ENCODE measurements at regions of chr7 and their contacts with region 1.

Region 1: DNA sequence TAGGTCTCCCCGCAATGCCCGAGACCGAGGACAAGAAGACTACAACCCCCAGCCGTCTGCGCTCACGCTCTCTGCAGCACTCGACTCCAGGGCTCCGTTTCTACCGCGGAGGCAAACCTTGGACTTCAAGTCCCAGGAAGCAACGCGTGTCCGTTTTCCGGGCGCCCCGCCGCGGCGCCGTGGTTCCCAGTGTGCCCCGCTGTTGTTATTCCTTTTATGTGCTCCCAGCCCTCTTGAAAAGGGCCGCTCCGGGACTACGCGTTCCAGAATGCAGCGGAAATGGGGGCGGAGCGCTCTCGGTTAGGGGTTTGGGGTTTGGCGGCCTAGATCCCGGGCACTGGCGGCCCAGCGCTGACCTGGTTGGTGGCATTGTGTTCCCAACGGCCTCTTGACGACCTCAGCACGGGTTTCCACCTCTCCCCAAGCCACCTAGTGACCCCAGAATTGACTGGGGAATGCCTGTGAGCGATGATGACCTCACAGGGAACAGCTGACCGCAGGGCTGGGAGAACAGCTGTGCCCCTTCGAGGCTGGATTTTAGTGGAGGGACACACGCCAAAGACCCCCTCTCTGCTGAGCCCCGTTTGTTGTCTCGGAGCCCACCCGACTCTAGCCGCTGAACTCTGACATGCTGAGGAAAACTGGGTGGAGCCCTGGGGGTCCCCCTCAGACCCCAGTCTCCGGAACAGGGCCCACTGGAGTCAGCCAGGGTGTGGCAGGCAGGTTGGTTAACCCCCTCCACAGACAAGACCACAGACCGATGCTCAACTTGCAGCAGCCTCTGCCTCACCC is 488 bp upstream of the CDK5 start:
- DNase-seq: peak; percentile 98
- ATAC-seq: peak; percentile 96
- H3K4me3 Mint-ChIP-seq: peak overlapping the region; percentile 81
- H3K27ac Mint-ChIP-seq: peak overlapping the region; percentile 94
- H3K4me1 Mint-ChIP-seq: peaks cover 28% of the 10 kb centered on the region
- H3K27me3 Mint-ChIP-seq: no peaks in the 10 kb centered on the region

Region 2: GRCh38 chr7:149125863-149126661 is 1932.1 kb before region 1 on chr7 and contains the start of gene ZNF425:
- CTCF ChIA-PET with region 1: no interaction called
- POLR2A ChIA-PET with region 1: no interaction called
- intact Hi-C with region 1: loop called in 1 of 2 experiments (anchors 5 kb)
- DNase-seq: peak; percentile 96
- ATAC-seq: peak; percentile 88
- H3K4me3 Mint-ChIP-seq: peak within 1 kb of the TSS; percentile 83
- H3K27ac Mint-ChIP-seq: peak within 1 kb of the TSS; percentile 99
- H3K4me1 Mint-ChIP-seq: peaks cover 21% of the 10 kb centered on the region
- H3K27me3 Mint-ChIP-seq: no peaks in the 10 kb centered on the region
- total RNA-seq, gene ZNF425: 0.43 to 0.95 TPM

Region 3: DNA sequence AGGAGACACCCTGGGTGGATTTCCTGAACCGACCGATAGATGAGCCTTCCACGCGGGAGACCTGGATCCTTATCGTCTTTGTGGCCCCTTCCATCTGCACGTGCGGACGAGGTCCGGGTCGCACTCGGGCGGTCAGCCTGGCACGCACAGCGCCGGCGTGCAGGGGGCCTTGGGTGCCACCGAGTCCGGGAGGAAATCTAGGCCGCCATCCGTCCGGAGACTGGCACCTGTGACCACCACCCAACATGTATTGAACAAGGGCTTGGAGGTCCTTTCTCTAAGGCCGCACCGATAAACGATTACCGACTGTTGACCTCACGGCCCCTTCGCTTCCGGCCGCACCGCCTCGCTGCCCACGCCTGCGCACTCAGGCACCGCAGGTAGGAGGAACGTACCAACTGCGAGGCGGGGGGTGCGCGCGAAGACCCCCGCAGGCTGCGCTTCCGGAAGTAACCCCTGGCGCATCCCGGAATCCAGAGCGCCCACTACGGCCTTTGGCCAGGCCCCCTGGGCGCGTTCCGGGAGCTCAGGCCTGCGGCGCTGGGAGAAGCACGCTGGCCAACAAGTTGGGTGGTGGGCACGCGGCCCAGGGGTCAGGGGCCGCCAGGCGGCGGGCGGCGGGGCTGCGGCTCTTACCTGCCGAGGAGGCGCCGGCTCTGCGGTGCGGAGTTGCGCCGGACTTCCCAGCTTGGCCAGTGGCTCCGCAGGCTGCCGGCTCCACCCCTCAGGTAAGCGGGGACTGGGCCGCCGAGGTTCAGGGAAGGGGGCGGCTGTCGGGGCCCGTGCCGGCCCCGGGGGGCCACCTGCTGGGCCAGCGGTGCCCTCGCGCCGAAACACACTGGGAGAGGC is 735.1 kb before region 1 on chr7 and contains the starts of genes ACTR3C and LRRC61:
- CTCF ChIA-PET with region 1: no interaction called
- POLR2A ChIA-PET with region 1: no interaction called
- intact Hi-C with region 1: loop called in 1 of 2 experiments (anchors 1 kb)
- DNase-seq: peak; percentile 78
- ATAC-seq: peak; percentile 24
- H3K4me3 Mint-ChIP-seq: peak within 1 kb of the TSS; percentile 91
- H3K27ac Mint-ChIP-seq: peak within 1 kb of the TSS; percentile 99
- H3K4me1 Mint-ChIP-seq: peaks cover 52% of the 10 kb centered on the region
- H3K27me3 Mint-ChIP-seq: no peaks in the 10 kb centered on the region
- total RNA-seq, gene ACTR3C: 3.2 to 4.7 TPM
- total RNA-seq, gene LRRC61: 13.0 to 17.4 TPM

Region 4: DNA sequence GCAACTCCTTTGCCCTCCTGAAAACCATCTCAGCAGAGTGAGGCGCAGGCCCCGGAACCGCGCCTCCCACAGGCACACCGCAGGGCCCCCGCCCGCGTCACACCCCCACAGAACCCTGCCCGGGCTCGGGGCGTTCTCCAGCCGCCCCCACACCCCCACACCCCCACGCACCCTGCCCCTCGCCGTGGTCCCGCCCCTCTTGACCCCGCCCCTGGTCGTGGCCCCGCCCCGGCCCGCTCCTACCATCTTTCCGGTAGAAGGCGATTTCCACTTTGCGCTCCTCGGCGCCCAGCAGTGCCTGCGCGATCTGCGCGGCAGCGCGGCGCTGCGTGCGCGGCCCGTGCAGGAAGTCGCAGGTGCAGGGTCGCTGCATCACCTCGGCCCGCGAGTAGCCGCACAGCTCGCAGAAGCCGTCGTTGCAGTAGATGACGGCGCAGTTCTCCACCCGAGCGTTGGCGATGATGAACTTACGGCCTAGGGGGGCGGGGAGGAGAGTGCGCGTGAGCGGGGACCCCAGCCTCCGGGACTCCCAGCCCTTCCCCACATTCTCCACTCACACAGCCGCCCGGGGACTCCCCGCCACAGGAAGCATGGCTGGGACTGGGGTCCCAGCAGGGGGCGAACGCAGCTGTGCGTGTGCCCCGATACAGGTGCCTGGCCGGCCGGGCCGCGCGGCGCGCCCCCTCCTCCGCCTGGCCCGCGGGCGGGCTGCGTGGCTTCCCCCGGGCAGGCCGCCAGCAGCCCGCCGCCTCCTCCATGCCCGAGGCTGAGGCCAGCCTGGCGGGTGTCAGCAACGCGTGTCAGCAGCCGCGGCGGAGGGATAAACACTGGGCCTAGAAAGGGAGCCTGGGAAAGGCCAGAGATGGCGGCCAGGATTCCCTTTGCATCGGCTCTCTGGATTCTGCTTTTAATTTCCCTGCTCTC is 83.5 kb before region 1 on chr7:
- CTCF ChIA-PET with region 1: no interaction called
- POLR2A ChIA-PET with region 1: no interaction called
- intact Hi-C with region 1: loop called in 1 of 2 experiments (anchors 1 kb)
- DNase-seq: peak; percentile 85
- ATAC-seq: peak; percentile 81
- H3K4me3 Mint-ChIP-seq: peak overlapping the region; percentile 73
- H3K27ac Mint-ChIP-seq: peak overlapping the region; percentile 51
- H3K4me1 Mint-ChIP-seq: peaks cover 30% of the 10 kb centered on the region
- H3K27me3 Mint-ChIP-seq: peaks cover 21% of the 10 kb centered on the region

Region 5: GRCh38 chr7:151028131-151028947 is 29.8 kb before region 1 on chr7 and contains the start of gene ABCB8:
- CTCF ChIA-PET with region 1: interaction called, 4 read pairs
- POLR2A ChIA-PET with region 1: no interaction called
- intact Hi-C with region 1: loop called (anchors 1 kb)
- DNase-seq: peak; percentile 99
- ATAC-seq: peak; percentile 95
- H3K4me3 Mint-ChIP-seq: peak within 1 kb of the TSS; percentile 97
- H3K27ac Mint-ChIP-seq: peak within 1 kb of the TSS; percentile 95
- H3K4me1 Mint-ChIP-seq: peaks cover 23% of the 10 kb centered on the region
- H3K27me3 Mint-ChIP-seq: no peaks in the 10 kb centered on the region
- total RNA-seq, gene ABCB8: 41.9 to 44.5 TPM

Region 6: DNA sequence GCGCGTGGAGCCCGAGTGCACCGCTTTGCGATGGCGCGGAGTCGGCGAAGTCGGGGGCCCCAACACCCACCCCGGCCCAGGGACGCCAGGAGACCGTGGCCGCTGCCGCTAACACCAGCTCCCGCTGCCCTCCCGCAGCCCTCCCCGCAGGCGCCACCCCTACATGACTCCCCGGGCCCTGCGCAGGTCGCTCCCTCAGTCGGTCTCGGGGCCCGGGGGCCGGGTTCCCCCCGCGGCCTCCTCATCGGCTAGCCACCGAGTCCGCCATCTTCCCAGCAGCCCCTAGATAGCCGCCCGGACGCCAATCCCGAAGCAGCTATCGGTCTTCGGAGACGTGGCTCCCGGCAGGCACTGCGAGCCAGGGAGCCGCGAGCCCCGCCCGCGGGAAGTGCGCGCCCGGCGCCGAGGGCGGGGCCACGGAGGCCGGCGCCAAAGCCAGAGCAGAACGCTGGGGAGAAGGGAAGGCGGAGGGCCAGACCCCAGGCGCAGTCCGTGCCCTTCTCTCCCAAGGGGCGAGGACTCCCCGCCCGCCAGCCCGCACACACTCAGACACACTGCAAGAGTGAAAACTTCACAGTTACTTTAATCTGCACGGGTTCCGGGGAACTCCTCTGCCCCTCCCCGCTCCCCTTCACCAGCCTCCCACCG is 22.5 kb after region 1 on chr7 and contains the start of gene FASTK:
- CTCF ChIA-PET with region 1: interaction called, 3 read pairs
- POLR2A ChIA-PET with region 1: interaction called, 3 read pairs
- intact Hi-C with region 1: loop called (anchors 1 kb)
- DNase-seq: peak; percentile 94
- ATAC-seq: peak; percentile 89
- H3K4me3 Mint-ChIP-seq: peak within 1 kb of the TSS; percentile 94
- H3K27ac Mint-ChIP-seq: peak within 1 kb of the TSS; percentile 91
- H3K4me1 Mint-ChIP-seq: peaks cover 43% of the 10 kb centered on the region
- H3K27me3 Mint-ChIP-seq: peaks cover 7% of the 10 kb centered on the region
- total RNA-seq, gene FASTK: 56.6 to 56.7 TPM

Region 7: GRCh38 chr7:151226875-151227782 is 168.9 kb after region 1 on chr7 and contains the start of gene ABCF2:
- CTCF ChIA-PET with region 1: no interaction called
- POLR2A ChIA-PET with region 1: no interaction called
- intact Hi-C with region 1: loop called in 1 of 2 experiments (anchors 1 kb)
- DNase-seq: peak; percentile 99
- ATAC-seq: peak; percentile 100
- H3K4me3 Mint-ChIP-seq: peak within 1 kb of the TSS; percentile 92
- H3K27ac Mint-ChIP-seq: peak within 1 kb of the TSS; percentile 92
- H3K4me1 Mint-ChIP-seq: peaks cover 40% of the 10 kb centered on the region
- H3K27me3 Mint-ChIP-seq: no peaks in the 10 kb centered on the region
- total RNA-seq, gene ABCF2: 48.4 to 49.0 TPM

Measured in activated CD4-positive, alpha-beta T cell treated with anti-CD3 and anti-CD28 coated beads for 36 hours (primary cell).